ENCODE measurements at regions of chr15 and their contacts with region 1.

Region 1: DNA sequence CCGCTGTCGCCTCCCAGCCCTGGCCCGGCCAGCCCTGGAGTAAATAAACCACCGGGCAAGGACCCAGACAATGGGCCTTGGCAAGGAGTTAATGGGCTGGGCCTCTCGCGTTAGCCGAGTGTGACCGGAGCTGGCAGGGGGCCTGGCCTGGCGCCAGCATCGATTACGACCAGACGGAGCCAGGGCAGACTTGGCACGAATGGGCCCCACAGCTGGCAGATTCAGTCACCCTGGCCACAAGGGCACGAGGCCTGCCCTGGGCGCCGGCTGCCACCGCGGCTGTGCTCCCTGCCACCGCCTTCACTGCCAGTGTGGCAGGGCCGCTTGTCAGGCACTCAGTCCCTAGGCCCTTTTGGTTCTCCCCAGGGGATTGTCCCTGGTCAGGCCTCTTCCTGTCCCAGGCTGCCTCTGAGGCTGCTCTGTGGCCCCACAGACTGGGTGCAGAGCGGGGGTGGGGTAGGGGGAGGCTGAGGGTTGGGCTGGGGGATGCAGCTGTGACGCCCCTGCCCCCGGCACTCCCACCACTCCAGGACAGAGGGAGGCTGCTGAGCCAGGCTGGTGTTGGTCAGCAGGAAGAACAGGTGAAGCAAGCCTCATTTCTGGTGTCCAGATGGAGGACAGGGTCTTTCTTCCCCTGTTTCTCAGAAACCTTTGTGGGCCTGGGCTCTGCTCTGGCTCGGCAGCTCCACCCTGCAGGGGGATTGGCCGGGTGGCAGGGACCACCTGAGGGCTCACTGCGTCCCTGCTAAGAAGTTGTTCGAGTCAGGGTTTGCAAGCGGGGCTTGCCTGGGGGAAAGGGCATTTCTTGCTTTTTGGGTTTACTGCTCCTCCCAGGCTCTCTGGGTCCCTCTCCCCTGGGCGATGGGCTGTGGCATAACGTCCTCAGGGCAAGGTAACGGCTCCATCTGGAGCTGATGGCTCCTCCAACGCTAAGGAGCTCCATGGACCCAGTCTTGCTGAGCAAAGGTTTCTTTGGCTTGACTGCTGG is 30.5 kb upstream of the SRP14 start:
- DNase-seq: peak; percentile 59
- ATAC-seq: peak; percentile 76
- H3K4me3 Mint-ChIP-seq: peak overlapping the region; percentile 60
- H3K27ac Mint-ChIP-seq: peak overlapping the region; percentile 83
- H3K4me1 Mint-ChIP-seq: peaks cover 48% of the 10 kb centered on the region
- H3K27me3 Mint-ChIP-seq: no peaks in the 10 kb centered on the region
- CTCF ChIP-seq: no peak

Region 2: GRCh38 chr15:40081691-40082194 is 12.3 kb after region 1 on chr15:
- CTCF ChIA-PET with region 1: interaction called, 3 read pairs
- POLR2A ChIA-PET with region 1: interaction called, 27 read pairs
- intact Hi-C with region 1: loop called (anchors 1 kb)
- DNase-seq: no peak
- ATAC-seq: no peak
- H3K4me3 Mint-ChIP-seq: peak overlapping the region; percentile 78
- H3K27ac Mint-ChIP-seq: peak overlapping the region; percentile 89
- H3K4me1 Mint-ChIP-seq: peaks cover 60% of the 10 kb centered on the region
- H3K27me3 Mint-ChIP-seq: no peaks in the 10 kb centered on the region
- CTCF ChIP-seq: no peak

Measured in activated B cell treated with CpG ODN at 0.5 μM for 24 hours (primary cell).